Endothelial cell of umbilical vein (primary cell): ENCODE measurements at regions of chr6 and their contacts with region 1.

Region 1: DNA sequence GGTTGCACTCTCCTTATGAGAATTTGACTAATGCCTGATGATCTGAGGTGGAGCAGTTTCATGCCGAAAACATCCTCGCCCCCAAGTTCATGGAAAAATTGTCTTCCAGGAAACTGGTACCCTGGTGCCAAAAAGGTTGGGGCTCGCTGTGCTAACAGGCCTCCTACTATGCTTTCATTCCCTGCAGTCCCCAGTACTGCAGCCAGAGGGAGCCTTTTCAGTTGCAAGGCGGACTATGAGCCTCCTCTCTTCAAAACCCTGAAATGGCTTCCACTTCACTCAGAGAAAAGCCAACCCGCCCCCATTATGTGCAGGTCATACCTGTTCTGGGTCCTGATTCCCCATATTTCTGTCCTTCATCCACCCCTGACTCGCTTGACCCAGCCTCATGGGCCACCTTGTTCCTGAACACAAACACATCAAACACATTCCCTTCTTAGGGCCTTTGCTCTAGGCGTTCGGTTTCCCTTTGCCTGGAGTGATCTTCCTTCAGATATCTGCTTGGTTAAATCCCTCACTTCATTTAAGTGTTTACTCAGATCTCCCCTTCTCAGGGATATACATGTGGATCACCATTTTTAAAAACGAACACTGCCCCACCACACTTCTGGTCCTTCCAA is 173.7 kb downstream of the PHACTR1 start:
- DNase-seq: peak; percentile 3
- H3K4me3 ChIP-seq: no peak overlapping the region
- H3K27ac ChIP-seq: no peak overlapping the region
- H3K4me1 ChIP-seq: no peaks in the 10 kb centered on the region
- H3K27me3 ChIP-seq: peaks cover 0 to 10% of the 10 kb centered on the region in 2 experiments
- CTCF ChIP-seq: peak; percentile 66 to 70
- POLR2A ChIP-seq: no peak

Region 2: DNA sequence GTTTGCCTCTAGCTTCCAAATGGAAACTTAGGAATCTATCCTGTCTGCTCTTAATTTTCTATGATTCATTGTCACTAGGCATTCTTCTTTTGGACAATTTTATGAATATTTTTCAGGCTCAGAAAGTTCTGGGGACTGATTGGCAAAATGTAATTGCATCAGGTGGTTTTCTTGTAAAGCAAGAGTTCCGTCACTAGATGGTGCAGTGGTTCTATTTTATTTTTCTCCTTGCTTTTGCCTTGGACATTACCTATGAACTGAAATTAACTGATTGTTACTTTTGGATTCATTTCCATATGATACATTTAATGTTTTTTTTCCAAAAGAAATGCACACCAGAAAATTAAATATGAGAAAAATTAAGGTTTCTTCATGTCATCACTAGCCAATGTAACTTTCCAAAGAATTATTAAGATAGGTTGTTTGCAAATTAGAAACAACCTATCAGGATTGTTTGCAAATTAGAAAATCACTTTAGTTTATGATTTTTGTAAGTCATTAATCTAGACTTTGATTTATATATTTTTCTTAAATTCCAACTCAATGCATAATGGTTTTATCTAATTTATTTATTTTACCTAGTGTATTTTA is 1304.8 kb before region 1 on chr6:
- CTCF ChIA-PET with region 1: interaction called, 5 read pairs
- POLR2A ChIA-PET with region 1: no interaction called
- dilution Hi-C with region 1: no loop called
- intact Hi-C with region 1: loop called (anchors 5 kb)
- DNase-seq: peak; percentile 83
- H3K4me3 ChIP-seq: no peak overlapping the region
- H3K27ac ChIP-seq: peak overlapping the region; percentile 79
- H3K4me1 ChIP-seq: peaks cover 29% of the 10 kb centered on the region
- H3K27me3 ChIP-seq: no peaks in the 10 kb centered on the region
- CTCF ChIP-seq: peak; percentile 41 to 42
- POLR2A ChIP-seq: no peak

Region 3: GRCh38 chr6:12296255-12296573 is 594.1 kb before region 1 on chr6:
- CTCF ChIA-PET with region 1: interaction called, 15 read pairs
- POLR2A ChIA-PET with region 1: interaction called, 5 read pairs
- dilution Hi-C with region 1: no loop called
- intact Hi-C with region 1: no loop called
- DNase-seq: peak; percentile 53
- H3K4me3 ChIP-seq: peak overlapping the region in 2 of 3 experiments; percentile 91 to 96
- H3K27ac ChIP-seq: peak overlapping the region; percentile 98
- H3K4me1 ChIP-seq: peaks cover 30% of the 10 kb centered on the region
- H3K27me3 ChIP-seq: no peaks in the 10 kb centered on the region
- CTCF ChIP-seq: no peak
- POLR2A ChIP-seq: no peak

Region 4: DNA sequence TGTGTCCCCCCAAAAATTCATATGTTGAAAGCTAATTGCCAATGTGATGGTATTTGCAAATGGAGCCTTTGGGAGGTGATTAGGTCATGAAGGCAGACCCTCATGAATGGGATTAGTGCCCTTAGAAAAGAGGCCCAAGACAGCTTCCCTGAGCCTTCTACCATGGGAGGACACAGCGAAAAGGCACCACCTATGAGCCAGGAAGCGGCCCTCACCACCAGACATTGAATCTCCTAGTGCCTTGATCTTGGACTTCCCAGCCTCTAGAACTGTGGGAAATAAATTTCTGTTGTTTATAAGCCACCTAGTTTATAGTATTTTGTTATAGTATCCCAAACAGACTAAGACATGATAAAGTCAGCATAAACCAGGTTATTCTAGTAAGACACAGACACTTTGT is 581.2 kb before region 1 on chr6:
- CTCF ChIA-PET with region 1: no interaction called
- POLR2A ChIA-PET with region 1: no interaction called
- dilution Hi-C with region 1: no loop called
- intact Hi-C with region 1: loop called (anchors 5 kb)
- DNase-seq: no peak
- H3K4me3 ChIP-seq: no peak overlapping the region
- H3K27ac ChIP-seq: no peak overlapping the region
- H3K4me1 ChIP-seq: peaks cover 14% of the 10 kb centered on the region
- H3K27me3 ChIP-seq: no peaks in the 10 kb centered on the region
- CTCF ChIP-seq: no peak
- POLR2A ChIP-seq: no peak

Region 5: GRCh38 chr6:12637960-12638641 is 252.2 kb before region 1 on chr6:
- CTCF ChIA-PET with region 1: interaction called, 84 read pairs
- POLR2A ChIA-PET with region 1: no interaction called
- dilution Hi-C with region 1: no loop called
- intact Hi-C with region 1: loop called (anchors 1 kb)
- DNase-seq: peak; percentile 67
- H3K4me3 ChIP-seq: no peak overlapping the region
- H3K27ac ChIP-seq: no peak overlapping the region
- H3K4me1 ChIP-seq: no peaks in the 10 kb centered on the region
- H3K27me3 ChIP-seq: peaks cover 0 to 2% of the 10 kb centered on the region in 2 experiments
- CTCF ChIP-seq: peak; percentile 78 to 81
- POLR2A ChIP-seq: no peak

Region 6: DNA sequence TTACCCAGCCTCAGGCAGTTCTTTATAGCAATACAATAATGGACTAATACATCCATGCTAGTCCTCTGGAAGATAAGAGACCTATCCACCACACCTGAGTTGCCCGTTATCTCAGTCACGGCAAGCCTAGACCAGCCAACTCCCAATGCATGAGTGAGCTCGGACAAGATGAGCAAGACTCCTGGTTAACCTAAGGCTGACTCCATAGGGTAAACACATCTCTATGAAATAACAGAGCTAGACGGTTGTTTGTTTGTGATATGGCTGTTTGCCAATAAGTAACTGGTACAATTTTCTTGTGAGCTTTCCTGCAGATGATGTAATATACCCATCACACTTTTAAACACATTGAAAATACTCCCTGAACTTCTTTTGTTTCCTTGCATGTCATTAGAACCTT is 244.3 kb before region 1 on chr6:
- CTCF ChIA-PET with region 1: interaction called, 10 read pairs
- POLR2A ChIA-PET with region 1: no interaction called
- dilution Hi-C with region 1: no loop called
- intact Hi-C with region 1: no loop called
- DNase-seq: no peak
- H3K4me3 ChIP-seq: no peak overlapping the region
- H3K27ac ChIP-seq: no peak overlapping the region
- H3K4me1 ChIP-seq: no peaks in the 10 kb centered on the region
- H3K27me3 ChIP-seq: peaks cover 0 to 2% of the 10 kb centered on the region in 2 experiments
- CTCF ChIP-seq: no peak
- POLR2A ChIP-seq: no peak

Region 7: DNA sequence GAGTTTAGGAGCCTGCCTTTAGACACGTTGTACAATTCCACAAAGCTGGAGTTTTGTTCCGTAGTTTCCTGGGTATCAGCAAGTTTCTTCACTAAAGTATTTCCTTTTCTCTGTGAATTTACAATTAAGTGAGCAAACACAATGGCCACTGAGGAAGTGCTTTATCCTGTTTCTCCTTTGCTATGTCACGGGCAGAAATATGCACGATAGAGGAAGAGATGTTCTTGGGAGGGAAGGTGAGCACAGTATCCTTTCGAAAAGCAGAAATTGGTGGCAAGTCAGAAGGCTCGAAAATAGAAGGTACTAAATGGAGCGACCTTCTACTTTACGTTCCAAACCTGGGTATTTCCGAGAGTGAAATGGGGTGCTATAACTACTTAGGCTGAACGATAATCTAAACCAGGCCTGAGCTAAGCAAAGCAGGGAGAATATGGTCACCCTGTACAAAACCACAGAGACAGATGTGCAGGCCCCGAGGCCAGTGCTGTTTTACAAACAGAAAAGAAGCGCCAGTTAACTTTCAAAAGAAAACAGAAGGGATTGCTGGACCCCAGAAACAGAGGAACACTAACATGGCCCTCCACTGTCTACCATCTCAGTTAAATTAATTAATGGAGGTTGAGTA is 178.4 kb after region 1 on chr6:
- CTCF ChIA-PET with region 1: no interaction called
- POLR2A ChIA-PET with region 1: no interaction called
- dilution Hi-C with region 1: no loop called
- intact Hi-C with region 1: no loop called
- DNase-seq: peak; percentile 63
- H3K4me3 ChIP-seq: no peak overlapping the region
- H3K27ac ChIP-seq: no peak overlapping the region
- H3K4me1 ChIP-seq: peaks cover 10% of the 10 kb centered on the region
- H3K27me3 ChIP-seq: no peaks in the 10 kb centered on the region
- CTCF ChIP-seq: no peak
- POLR2A ChIP-seq: no peak